Vagina (tissue), 2 donors: ENCODE measurements at regions of chr16 and their contacts with region 1.

Region 1: GRCh38 chr16:68873635-68874471 is 30.5 kb downstream of the TANGO6 start:
- DNase-seq: no peak
- H3K4me3 ChIP-seq: no peak overlapping the region
- H3K27ac ChIP-seq: no peak overlapping the region
- H3K4me1 ChIP-seq: no peaks in the 10 kb centered on the region
- H3K27me3 ChIP-seq: no peaks in the 10 kb centered on the region
- CTCF ChIP-seq: no peak
- POLR2A ChIP-seq: no peak

Region 2: DNA sequence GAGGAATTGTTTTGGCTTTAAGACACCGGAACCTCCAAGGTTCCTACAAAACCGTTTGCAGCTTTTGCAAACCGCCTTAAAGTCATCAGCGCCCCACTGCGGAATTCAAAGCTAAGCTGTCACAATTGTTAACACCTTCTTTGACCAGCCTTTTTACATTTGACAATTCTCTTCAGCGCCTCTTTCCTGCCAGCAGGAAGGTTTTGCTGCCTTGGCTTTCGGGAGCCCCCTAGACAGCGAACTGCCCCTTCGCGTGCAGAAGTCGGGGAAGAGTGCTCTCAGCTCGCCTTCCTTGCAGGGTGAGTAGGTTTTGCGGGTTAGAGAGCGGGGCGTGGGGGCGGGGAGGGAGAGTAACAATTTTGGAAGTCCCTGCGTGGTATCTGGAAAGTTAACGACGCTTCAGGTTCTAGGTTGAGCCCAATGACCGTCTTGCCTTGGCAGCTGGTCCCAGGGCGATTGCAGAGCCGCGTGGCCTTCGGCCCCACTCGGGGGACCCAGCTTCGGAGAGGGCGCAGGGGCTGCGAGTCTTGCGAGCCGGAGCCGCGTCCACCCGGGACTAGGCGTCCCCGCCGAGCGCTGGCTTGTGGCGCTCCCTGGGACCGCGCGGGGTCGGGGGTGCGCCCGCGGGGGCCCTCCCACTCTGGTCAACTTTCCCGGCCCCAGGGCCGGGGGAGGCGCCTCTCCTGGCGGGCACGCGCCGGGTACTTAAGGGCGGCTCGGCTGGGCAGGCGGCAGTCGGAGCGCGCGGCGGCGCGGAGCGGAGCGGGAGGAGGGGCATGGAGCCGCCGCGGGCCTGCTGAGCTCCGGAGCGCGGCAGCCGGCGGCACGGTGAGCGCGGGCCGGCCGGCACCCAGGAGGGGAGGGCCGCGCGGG is 231.9 kb after region 1 on chr16 and contains the start of gene HAS3:
- intact Hi-C with region 1: loop called (anchors 10 kb)
- DNase-seq: no peak
- H3K4me3 ChIP-seq: peak within 1 kb of the TSS; percentile 54 to 59
- H3K27ac ChIP-seq: no peak within 1 kb of the TSS
- H3K4me1 ChIP-seq: peaks cover 26% of the 10 kb centered on the region
- H3K27me3 ChIP-seq: no peaks in the 10 kb centered on the region
- CTCF ChIP-seq: no peak
- POLR2A ChIP-seq: no peak
- total RNA-seq, gene HAS3: 25.8 TPM